ENCODE measurements at regions of chr11 and their contacts with region 1.

Region 1: GRCh38 chr11:123407130-123407995 is 22.7 kb upstream of the GRAMD1B start:
- DNase-seq: no peak
- ATAC-seq: peak; percentile 81
- H3K4me3 ChIP-seq: peak overlapping the region; percentile 58
- H3K27ac ChIP-seq: peak overlapping the region; percentile 75
- H3K4me1 ChIP-seq: peaks cover 57% of the 10 kb centered on the region
- H3K27me3 ChIP-seq: no peaks in the 10 kb centered on the region
- CTCF ChIP-seq: peak; percentile 79 to 81 (median 80)
- EP300 ChIP-seq: 0 out of 4 replicates have a peak, but pooled peaks of 1 of the 2 experiments have one; percentile 8
- POLR2A ChIP-seq: no peak
- RAD21 ChIP-seq: peak; percentile 83

Region 2: DNA sequence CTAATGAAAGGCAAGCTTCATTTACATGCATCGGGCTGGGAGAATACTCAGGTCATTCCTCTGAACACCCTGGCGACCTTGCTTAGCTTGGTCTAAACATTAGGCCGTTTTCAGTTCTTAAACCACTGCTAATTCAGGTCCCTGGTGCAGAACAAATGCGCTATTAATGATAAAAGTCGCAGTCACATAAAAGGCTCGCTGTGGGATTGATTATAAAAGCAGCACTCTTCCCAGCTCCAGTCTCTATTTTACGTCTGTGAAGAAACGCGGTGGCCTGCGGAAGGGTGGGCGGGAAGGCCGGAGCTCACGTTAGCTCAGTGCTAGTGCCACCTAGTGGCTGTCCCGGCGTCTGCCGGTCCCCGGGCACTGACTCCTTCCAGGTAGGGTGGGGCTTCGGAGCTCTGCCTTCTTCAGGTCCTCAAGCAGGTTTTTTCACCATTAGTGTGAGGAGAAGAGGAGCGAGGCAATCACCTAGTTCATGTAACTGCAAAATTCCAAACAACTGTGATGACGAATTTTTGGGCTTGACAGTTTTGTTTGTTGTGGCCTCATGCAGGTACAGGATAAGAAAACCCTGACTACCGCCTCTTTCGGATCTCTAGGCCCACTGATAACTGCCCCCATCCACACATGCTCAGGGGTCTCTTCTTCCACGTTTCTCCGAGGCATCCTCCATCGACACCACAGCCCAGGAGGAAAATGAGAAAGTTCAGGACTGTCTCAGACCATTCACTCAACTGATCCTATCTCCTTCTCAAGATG is 145.8 kb before region 1 on chr11:
- CTCF ChIA-PET with region 1: interaction called, 11 read pairs
- POLR2A ChIA-PET with region 1: no interaction called
- RAD21 ChIA-PET with region 1: interaction called, 10 read pairs
- SMC1A ChIA-PET with region 1: interaction called, 7 read pairs
- in situ Hi-C with region 1: no loop called
- intact Hi-C with region 1: no loop called
- DNase-seq: no peak
- ATAC-seq: peak; percentile 74
- H3K4me3 ChIP-seq: no peak overlapping the region
- H3K27ac ChIP-seq: no peak overlapping the region
- H3K4me1 ChIP-seq: peaks cover 28% of the 10 kb centered on the region
- H3K27me3 ChIP-seq: no peaks in the 10 kb centered on the region
- CTCF ChIP-seq: peak; percentile 69 to 95 (median 85)
- EP300 ChIP-seq: no peak
- POLR2A ChIP-seq: no peak
- RAD21 ChIP-seq: peak; percentile 46

Region 3: GRCh38 chr11:123357961-123358841 is 49.2 kb before region 1 on chr11:
- CTCF ChIA-PET with region 1: interaction called, 51 read pairs
- POLR2A ChIA-PET with region 1: interaction called, 7 read pairs
- RAD21 ChIA-PET with region 1: interaction called, 67 read pairs
- SMC1A ChIA-PET with region 1: interaction called, 60 read pairs
- in situ Hi-C with region 1: no loop called
- intact Hi-C with region 1: no loop called
- DNase-seq: peak; percentile 34
- ATAC-seq: peak; percentile 80
- H3K4me3 ChIP-seq: peak overlapping the region; percentile 91
- H3K27ac ChIP-seq: peak overlapping the region; percentile 27; the same call in 1 of the 2 replicates
- H3K4me1 ChIP-seq: peaks cover 7% of the 10 kb centered on the region; the same call in 1 of the 2 replicates
- H3K27me3 ChIP-seq: no peaks in the 10 kb centered on the region
- CTCF ChIP-seq: peak; percentile 20 to 43 (median 27); a peak in 4 of 6 replicates
- EP300 ChIP-seq: no peak
- POLR2A ChIP-seq: peak; percentile 76
- RAD21 ChIP-seq: peak; percentile 56

Region 4: DNA sequence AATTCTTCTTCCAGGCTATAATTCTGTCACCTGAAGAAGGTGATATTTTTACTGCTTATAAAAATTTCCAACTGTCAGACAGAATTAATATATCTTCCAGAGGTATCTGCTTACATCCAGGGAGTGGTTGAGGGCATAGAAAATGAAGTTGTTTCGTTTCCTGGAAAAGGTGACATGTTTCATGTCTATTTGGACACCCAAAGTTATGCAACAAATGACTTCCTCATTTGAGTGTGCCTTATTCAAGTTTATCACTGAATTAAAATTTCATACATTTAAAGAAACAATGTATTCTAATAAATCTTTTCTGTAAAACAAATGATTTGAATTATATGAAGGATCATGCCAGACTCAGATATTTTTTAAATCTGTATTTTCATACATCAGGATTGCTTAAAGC is 14.2 kb after region 1 on chr11:
- CTCF ChIA-PET with region 1: interaction called, 35 read pairs
- POLR2A ChIA-PET with region 1: interaction called, 4 read pairs
- RAD21 ChIA-PET with region 1: interaction called, 12 read pairs
- SMC1A ChIA-PET with region 1: interaction called, 32 read pairs
- in situ Hi-C with region 1: no loop called
- intact Hi-C with region 1: no loop called
- DNase-seq: no peak
- ATAC-seq: no peak
- H3K4me3 ChIP-seq: no peak overlapping the region
- H3K27ac ChIP-seq: no peak overlapping the region
- H3K4me1 ChIP-seq: peaks cover 3% of the 10 kb centered on the region; the same call in 1 of the 2 replicates
- H3K27me3 ChIP-seq: no peaks in the 10 kb centered on the region
- CTCF ChIP-seq: no peak
- EP300 ChIP-seq: no peak
- POLR2A ChIP-seq: no peak
- RAD21 ChIP-seq: no peak

Region 5: DNA sequence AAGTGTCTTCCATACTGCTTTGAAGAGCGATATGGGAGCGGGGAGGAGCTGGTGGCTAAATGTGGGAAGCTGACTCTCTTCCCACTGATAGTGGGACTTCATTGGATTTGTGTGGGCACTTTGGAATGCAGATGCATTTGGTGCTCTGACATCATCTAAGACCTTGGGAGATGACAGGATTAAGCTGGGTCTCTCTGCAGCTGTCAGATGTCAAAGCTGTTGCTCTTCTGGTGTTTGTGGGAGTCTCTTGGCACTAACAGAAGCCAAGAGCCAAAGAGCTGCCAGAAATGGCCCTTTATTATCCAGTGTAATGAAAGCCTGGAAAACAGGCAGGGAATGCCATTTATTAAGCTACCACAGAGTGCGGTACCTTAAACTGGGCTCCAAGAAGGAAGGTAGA is 43.3 kb after region 1 on chr11:
- CTCF ChIA-PET with region 1: interaction called, 7 read pairs
- POLR2A ChIA-PET with region 1: interaction called, 5 read pairs
- RAD21 ChIA-PET with region 1: interaction called, 8 read pairs
- SMC1A ChIA-PET with region 1: interaction called, 18 read pairs
- in situ Hi-C with region 1: no loop called
- intact Hi-C with region 1: no loop called
- DNase-seq: no peak
- ATAC-seq: no peak
- H3K4me3 ChIP-seq: no peak overlapping the region
- H3K27ac ChIP-seq: no peak overlapping the region
- H3K4me1 ChIP-seq: peaks cover 32% of the 10 kb centered on the region
- H3K27me3 ChIP-seq: no peaks in the 10 kb centered on the region
- CTCF ChIP-seq: no peak
- EP300 ChIP-seq: no peak
- POLR2A ChIP-seq: no peak
- RAD21 ChIP-seq: no peak

Region 6: GRCh38 chr11:123478352-123478987 is 71.1 kb after region 1 on chr11:
- CTCF ChIA-PET with region 1: interaction called, 349 read pairs
- POLR2A ChIA-PET with region 1: interaction called, 24 read pairs
- RAD21 ChIA-PET with region 1: interaction called, 212 read pairs
- SMC1A ChIA-PET with region 1: interaction called, 244 read pairs
- in situ Hi-C with region 1: loop called (anchors 5 kb)
- intact Hi-C with region 1: loop called (anchors 1 kb)
- DNase-seq: peak; percentile 60
- ATAC-seq: peak; percentile 33
- H3K4me3 ChIP-seq: peak overlapping the region; percentile 54
- H3K27ac ChIP-seq: peak overlapping the region; percentile 36; the same call in 1 of the 2 replicates
- H3K4me1 ChIP-seq: peaks cover 53% of the 10 kb centered on the region
- H3K27me3 ChIP-seq: no peaks in the 10 kb centered on the region
- CTCF ChIP-seq: peak; percentile 61 to 77 (median 68)
- EP300 ChIP-seq: no peak
- POLR2A ChIP-seq: no peak
- RAD21 ChIP-seq: peak; percentile 92

Region 7: GRCh38 chr11:123560006-123560405 is 152.6 kb after region 1 on chr11:
- CTCF ChIA-PET with region 1: interaction called, 23 read pairs
- POLR2A ChIA-PET with region 1: no interaction called
- RAD21 ChIA-PET with region 1: interaction called, 10 read pairs
- SMC1A ChIA-PET with region 1: interaction called, 9 read pairs
- in situ Hi-C with region 1: no loop called
- intact Hi-C with region 1: loop called (anchors 1 kb)
- DNase-seq: no peak
- ATAC-seq: peak; percentile 73
- H3K4me3 ChIP-seq: peak overlapping the region; percentile 15; the same call in 1 of the 2 replicates
- H3K27ac ChIP-seq: no peak overlapping the region
- H3K4me1 ChIP-seq: peaks cover 14% of the 10 kb centered on the region
- H3K27me3 ChIP-seq: no peaks in the 10 kb centered on the region
- CTCF ChIP-seq: no peak
- EP300 ChIP-seq: no peak
- POLR2A ChIP-seq: peak; percentile 44; the same call in 1 of the 2 replicates
- RAD21 ChIP-seq: no peak

Measured in GM12878 (cell line).